Calu3 (cell line): ENCODE measurements at regions of chr7 and their contacts with region 1.

Region 1: DNA sequence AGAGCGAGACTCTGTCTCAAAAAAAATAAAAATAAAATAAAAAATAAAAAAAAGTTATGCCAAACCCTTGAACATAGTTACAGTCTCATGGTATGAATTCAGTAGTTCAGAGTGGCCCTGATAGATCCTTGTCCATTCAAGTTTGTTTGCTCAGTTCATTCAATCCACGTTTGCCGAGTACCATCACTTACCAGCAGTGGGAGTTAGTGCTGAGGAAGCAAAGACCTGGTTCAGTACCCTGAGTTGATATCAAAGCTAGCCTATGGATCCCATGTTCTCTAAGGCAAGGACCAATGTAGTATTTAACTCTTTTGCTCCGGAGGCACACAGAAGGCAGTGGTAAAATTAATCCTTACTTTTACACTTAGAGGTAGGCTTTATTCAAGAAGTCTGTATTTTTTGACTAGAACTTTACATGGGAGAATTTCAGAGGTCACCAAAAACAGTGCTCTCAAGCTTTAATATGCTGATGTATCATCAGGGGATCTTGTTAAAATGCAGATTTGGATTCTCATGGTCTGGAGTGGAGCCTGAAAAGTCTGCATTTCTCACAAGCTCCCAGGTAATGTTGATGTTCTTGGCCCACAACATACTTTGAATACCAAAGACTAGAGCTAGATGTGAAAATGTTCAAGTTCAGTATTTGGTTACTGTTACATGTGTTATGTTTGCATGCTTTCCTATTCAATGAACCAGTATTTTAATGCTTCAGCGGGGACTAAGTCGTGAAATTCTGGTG is 38.1 kb upstream of the HBP1 start:
- DNase-seq: no peak
- H3K4me3 Mint-ChIP-seq: no peak overlapping the region
- H3K27ac Mint-ChIP-seq: no peak overlapping the region
- H3K4me1 Mint-ChIP-seq: no peaks in the 10 kb centered on the region
- H3K27me3 Mint-ChIP-seq: peaks cover 2% of the 10 kb centered on the region
- CTCF ChIP-seq: no peak

Region 2: DNA sequence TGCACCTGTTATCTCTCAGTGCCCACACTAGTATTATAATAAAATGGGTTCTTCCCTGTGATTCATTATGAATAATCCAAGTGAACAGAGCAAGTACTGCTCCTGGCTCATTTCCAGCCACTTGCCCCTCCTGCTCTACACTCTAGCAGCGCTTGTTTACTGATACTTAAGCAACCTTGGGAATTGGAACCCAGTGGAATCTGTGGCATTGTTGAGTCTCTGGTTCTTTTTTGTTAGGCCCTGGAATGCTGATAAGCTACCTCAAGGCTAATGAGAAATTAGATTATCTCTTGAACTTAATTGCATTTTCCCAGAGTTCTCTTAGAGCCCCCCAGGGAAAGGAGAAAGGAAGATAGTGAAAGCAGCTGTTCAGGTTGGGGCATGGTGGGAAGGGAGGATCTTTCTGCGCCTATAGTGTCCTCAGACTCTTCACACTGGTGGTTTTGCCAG is 52.1 kb before region 1 on chr7:
- CTCF ChIA-PET with region 1: no interaction called
- intact Hi-C with region 1: loop called (anchors 10 kb)
- DNase-seq: peak; percentile 29
- H3K4me3 Mint-ChIP-seq: no peak overlapping the region
- H3K27ac Mint-ChIP-seq: no peak overlapping the region
- H3K4me1 Mint-ChIP-seq: no peaks in the 10 kb centered on the region
- H3K27me3 Mint-ChIP-seq: no peaks in the 10 kb centered on the region
- CTCF ChIP-seq: no peak